ENCODE measurements at regions of chr20 and their contacts with region 1.

Region 1: DNA sequence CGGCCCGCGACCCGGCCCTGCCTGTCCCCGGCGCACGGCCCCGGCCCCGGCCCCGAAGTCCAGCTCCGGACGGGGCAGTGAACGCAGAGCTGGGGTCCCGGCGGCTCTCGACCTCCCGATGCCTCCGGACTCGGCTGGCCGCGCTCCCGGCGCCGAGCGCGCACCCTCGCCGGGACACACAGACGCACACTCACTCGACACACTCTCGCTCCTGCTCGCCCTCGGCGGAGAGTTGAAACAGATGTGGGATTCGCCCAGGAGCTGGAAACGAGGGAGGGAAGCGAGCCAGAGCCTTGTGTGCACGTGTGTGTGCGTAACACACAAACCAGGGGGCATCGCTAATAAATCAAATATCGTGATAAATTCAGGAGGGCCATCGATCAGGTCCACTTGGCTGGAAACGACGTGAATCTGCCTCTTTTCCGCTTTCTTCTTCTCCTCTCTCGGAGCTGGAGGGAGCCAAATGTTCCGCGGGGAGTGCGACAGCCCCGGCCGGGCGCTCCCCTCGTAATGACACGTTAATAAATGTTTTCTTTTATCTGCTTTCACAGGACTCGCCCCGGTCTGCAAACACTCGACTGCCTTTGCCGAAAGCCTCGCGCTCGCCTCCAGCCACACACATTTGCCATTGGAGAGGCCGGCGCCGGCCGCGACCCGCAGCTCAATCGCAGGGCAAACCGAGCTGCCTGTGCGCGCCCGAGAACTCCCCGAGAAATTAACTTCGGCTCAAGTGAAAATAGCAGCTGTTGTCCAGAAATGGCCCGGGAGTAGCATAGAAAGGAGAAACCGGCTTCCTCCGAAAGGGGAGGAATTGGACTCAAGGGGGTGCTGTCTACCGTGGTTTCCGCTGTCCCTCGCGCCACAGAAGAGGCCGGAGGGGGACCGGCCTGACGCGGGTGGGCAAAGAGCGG is 828 bp upstream of the SULF2 start:
- DNase-seq: no peak
- H3K4me3 ChIP-seq: peak overlapping the region; percentile 66
- H3K27ac ChIP-seq: peak overlapping the region; percentile 92
- H3K4me1 ChIP-seq: peaks cover 54% of the 10 kb centered on the region
- H3K27me3 ChIP-seq: no peaks in the 10 kb centered on the region
- CTCF ChIP-seq: peak; percentile 38 to 79 (median 60)
- POLR2A ChIP-seq: no peak

Region 2: GRCh38 chr20:47682028-47682783 is 103.9 kb before region 1 on chr20:
- intact Hi-C with region 1: loop called (anchors 10 kb)
- DNase-seq: no peak
- H3K4me3 ChIP-seq: no peak overlapping the region
- H3K27ac ChIP-seq: peak overlapping the region; percentile 58
- H3K4me1 ChIP-seq: peaks cover 20% of the 10 kb centered on the region
- H3K27me3 ChIP-seq: no peaks in the 10 kb centered on the region
- CTCF ChIP-seq: no peak
- POLR2A ChIP-seq: no peak

Region 3: GRCh38 chr20:47725248-47725973 is 60.7 kb before region 1 on chr20:
- intact Hi-C with region 1: loop called (anchors 10 kb)
- DNase-seq: no peak
- H3K4me3 ChIP-seq: no peak overlapping the region
- H3K27ac ChIP-seq: no peak overlapping the region
- H3K4me1 ChIP-seq: peaks cover 32% of the 10 kb centered on the region
- H3K27me3 ChIP-seq: no peaks in the 10 kb centered on the region
- CTCF ChIP-seq: peak; percentile 60 to 74 (median 61)
- POLR2A ChIP-seq: no peak

Region 4: DNA sequence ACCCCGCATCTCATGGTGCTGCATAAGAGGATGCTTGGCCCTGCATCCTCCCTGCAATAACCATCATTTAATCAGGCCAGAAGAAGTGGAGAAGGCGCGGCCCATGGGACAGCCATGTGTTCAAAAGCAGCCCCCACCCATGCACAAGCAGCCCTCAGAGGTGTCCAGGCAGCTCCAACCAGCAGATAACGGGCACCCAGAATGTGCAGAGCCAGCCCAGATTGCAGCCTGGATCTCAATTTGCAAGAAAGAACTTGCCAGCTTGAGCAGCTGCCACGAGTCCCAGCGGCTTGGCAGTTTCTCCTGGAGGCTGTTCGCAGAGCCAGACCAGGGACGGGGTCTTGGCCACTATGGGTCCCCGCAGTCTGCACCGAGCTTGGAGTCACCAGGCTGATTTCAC is 60.5 kb after region 1 on chr20:
- intact Hi-C with region 1: no loop called
- DNase-seq: no peak
- H3K4me3 ChIP-seq: no peak overlapping the region
- H3K27ac ChIP-seq: no peak overlapping the region
- H3K4me1 ChIP-seq: no peaks in the 10 kb centered on the region
- H3K27me3 ChIP-seq: no peaks in the 10 kb centered on the region
- CTCF ChIP-seq: no peak
- POLR2A ChIP-seq: no peak

Region 5: GRCh38 chr20:48198929-48199451 is 412.9 kb after region 1 on chr20:
- intact Hi-C with region 1: loop called (anchors 10 kb)
- DNase-seq: peak in 1 of 2 donors; percentile 95
- H3K4me3 ChIP-seq: no peak overlapping the region
- H3K27ac ChIP-seq: peak overlapping the region; percentile 39
- H3K4me1 ChIP-seq: peaks cover 23% of the 10 kb centered on the region
- H3K27me3 ChIP-seq: no peaks in the 10 kb centered on the region
- CTCF ChIP-seq: no peak
- POLR2A ChIP-seq: no peak

Region 6: DNA sequence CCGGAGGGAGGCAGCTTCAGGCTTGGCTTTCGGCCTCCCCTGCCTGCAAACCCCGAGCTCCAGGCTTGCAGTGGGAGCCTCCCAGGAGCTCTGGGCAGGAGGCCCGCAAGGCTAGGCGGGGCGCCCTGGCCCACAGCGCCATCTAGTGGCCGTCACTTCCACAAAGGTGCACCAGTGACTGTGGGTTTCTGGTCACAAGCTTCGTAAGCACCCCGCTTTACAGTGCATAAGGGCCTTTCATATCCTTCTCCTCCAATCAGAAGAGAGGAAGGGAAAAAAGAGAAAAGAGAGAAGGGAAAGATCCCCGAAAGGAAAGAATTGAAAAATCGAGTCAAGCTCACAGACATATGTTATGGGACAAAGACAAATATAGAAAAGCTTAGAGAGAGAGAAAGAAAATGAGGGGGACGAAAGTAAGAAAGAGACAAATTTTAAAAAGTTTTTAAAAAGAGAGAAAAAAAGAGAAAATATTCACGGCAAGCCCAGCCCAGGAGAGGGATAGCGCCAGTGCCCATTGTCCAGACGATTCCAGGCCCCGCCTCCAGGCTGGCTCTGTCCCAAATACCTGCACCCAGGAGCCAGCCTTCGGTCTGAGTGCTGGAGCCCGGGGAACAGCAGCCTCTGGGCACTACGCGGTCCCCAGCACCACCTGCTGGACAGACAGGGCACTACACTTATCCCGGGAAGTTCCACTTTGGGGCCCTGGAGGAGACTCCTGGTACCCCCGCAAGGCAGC is 834.6 kb after region 1 on chr20:
- intact Hi-C with region 1: loop called (anchors 5 kb)
- DNase-seq: no peak
- H3K4me3 ChIP-seq: peak overlapping the region; percentile 2 to 17
- H3K27ac ChIP-seq: no peak overlapping the region
- H3K4me1 ChIP-seq: peaks cover 13% of the 10 kb centered on the region
- H3K27me3 ChIP-seq: no peaks in the 10 kb centered on the region
- CTCF ChIP-seq: peak; percentile 75 to 99 (median 89)
- POLR2A ChIP-seq: no peak